Astrocyte of the cerebellum (primary cell): ENCODE measurements at regions of chr2 and their contacts with region 1.

Region 1: GRCh38 chr2:158729873-158730620 is 65.1 kb upstream of the DAPL1 start:
- DNase-seq: no peak
- H3K4me3 ChIP-seq: no peak overlapping the region
- CTCF ChIP-seq: no peak

Region 2: DNA sequence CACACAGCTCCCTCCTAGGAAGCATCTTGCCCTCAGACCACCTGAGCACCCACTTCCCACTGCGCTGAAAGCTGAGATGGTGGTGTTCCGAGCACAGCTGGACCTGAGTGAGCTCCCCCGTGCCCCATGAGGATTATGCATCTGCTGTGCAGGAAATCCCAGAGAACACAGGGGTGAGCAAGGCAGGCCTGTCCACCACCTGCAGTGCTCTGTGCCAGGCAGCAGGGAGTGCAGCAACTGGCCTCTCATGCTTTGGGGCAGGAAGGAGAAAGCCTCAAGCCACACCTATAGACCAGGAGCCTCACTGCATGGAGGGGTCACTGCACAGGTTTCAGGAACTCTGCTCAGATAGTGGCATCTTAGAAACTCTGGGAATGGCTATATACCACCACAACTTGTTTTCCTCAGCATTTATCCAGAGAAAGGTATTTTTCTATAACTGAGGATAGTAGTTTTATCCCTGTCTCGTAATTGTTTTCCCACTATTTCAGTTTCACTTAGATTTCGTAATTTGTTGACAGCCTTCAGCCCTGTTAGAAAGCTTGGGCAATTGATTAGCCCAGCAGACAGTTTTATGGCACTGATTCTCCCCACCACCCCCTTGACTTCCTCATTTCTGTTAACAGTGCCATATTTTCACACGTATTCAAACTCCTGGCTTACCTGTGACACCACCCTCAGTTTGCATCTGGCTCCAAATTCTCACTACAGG is 79.2 kb before region 1 on chr2:
- in situ Hi-C with region 1: loop called (anchors 5 kb)
- DNase-seq: no peak
- H3K4me3 ChIP-seq: no peak overlapping the region
- CTCF ChIP-seq: no peak

Region 3: DNA sequence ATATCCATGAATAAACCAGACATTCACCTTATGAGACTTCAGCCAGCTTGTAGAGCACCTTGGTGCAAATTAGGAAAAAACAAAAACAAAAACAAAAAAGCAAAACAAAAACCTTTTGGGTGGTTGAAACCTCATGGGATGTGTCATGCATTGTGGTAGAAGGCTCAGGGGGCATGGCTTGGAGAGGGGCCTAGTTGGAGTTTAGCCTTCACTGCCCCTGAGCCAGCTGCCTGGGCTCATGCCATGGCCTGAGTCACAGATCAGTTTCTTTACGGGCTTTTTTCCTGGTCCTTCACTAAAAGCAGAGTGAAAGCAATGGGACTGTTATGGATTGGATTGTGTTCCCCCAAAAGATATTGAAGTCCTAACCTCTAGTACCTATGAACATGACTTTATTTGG is 43.1 kb after region 1 on chr2:
- in situ Hi-C with region 1: no loop called
- DNase-seq: peak; percentile 51
- H3K4me3 ChIP-seq: no peak overlapping the region
- CTCF ChIP-seq: no peak